ENCODE measurements at regions of chr1 and their contacts with region 1.

Region 1: DNA sequence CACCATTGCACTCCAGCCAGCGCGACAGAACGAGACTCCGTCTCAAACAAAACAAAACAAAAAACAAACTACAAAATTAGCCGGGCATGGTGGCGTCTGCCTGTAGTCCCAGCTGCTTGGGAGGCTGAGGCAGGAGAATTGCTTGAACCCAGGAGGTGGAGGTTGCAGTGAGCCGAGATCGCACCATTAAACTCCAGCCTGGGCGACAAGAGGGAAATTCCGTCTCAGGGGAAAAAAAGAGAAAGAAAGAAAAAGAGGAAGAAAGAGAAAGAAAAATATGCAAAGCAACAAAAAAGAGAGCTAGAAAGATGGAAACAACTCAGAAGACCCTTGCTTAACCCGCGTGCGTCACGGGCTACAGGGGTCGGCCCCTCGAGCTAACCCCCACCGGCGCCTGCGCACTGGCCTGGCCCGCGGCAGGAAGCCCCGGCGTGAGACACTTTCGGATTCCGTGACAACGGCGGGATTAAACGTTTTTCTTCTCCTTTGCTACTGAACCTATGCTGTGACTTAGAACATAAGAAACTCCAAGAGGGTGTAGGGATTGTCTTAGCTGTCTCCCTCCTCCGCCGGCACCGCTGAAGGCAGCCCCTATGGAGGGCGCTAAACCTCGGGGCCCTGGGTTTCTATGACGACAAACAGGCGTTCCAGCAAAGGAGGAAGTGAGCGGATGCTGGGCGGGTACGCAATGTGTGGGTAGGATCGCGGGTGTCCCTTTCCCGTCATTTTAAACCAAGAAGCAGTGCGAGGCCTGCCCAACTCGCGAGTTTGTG is at the start of gene AXDND1:
- DNase-seq: peak; percentile 86
- H3K4me3 Mint-ChIP-seq: peak within 1 kb of the TSS; percentile 84
- H3K27ac Mint-ChIP-seq: peak within 1 kb of the TSS; percentile 100
- H3K4me1 Mint-ChIP-seq: peaks cover 8% of the 10 kb centered on the region
- H3K27me3 Mint-ChIP-seq: peaks cover 4% of the 10 kb centered on the region
- total RNA-seq, gene AXDND1: 0.62 TPM in 1 of 2 replicates, not detected in the other

Region 2: DNA sequence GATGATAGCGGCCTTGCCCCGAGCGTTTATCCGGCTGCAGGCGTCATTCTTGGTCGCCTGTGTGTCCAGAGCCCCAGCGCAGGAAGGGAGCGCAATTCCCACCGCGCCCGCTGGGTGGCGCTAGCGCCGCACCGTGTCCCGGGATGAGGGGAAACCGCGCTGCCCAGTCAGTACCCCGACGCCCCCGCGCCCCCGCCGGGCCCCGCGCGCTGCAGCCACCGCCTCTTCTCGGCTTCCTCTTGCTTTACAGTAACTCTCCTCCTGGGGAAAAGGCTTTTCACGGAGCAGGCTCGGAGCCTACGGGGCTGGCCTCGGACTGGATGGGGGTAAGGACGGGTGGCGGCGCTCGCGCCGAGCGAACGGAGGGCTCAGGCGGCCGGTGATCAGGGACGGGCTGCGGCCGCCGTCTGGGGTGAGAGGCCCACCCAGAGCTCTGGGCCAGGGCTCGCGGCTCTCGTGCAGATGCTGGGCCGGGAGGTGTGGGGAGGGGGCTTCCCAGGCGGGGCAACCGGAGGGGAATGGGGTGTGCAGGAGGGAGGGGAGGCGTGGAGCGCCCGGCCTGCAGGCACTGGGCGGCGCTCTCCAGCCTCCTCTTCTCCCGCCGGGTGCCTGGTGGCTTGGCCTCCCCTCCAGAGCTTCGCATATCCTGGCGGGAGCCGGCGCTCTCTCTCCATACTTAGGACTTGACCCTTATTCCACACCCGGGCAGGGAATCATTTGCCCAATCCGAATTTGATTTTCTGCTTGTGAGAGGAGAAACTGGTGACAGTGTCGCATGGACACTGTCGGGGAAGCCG is 822.7 kb before region 1 on chr1:
- intact Hi-C with region 1: loop called (anchors 5 kb)
- DNase-seq: peak; percentile 83
- H3K4me3 Mint-ChIP-seq: peak overlapping the region; percentile 87
- H3K27ac Mint-ChIP-seq: peak overlapping the region; percentile 72
- H3K4me1 Mint-ChIP-seq: peaks cover 3% of the 10 kb centered on the region
- H3K27me3 Mint-ChIP-seq: no peaks in the 10 kb centered on the region

Region 3: DNA sequence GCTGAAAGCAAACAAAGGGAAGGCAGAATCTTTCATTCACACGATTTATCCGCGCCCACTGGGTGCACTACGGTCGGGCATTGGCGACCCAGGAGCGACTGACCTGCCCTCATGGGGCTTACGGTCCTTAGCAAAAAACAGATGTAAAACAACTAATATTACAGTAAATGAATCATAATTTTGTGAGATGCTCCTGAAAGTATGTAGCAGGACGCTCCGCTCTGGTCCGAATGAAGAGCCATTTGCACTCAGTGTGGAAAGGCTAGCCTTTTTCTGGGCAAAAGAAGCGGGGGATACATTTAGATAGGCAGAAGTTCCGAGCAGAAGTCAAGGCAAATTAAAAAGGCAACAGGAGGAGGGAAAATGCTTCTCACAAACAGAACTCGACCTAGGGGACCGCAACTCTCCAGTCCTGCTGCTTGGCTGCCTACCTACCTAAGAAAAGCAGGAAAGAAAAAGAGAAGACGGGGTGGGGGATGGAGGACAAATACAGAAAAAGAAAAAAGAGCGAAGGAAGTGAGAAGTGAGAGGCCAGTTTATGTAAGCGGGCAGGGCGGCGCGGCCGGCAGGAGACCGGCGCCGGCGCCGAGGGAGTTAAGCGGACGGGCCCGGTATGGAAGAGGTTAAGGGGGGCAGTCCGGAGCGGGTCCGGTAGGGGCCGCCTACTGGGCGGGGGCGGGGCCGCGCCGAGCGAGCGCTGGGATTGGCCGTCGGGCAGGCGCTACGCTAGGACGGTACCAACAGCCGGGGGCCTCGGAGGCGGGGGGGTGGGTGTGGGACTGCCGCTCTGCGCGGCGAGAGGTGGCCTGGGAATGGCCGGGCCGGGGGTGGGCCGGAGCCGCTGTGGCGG is 340.2 kb before region 1 on chr1 and contains the start of gene FAM20B:
- intact Hi-C with region 1: loop called (anchors 2 kb)
- DNase-seq: peak; percentile 84
- H3K4me3 Mint-ChIP-seq: peak within 1 kb of the TSS; percentile 93
- H3K27ac Mint-ChIP-seq: peak within 1 kb of the TSS; percentile 84
- H3K4me1 Mint-ChIP-seq: peaks cover 32% of the 10 kb centered on the region
- H3K27me3 Mint-ChIP-seq: peaks cover 15% of the 10 kb centered on the region
- total RNA-seq, gene FAM20B: 38.1 and 39.7 TPM in 2 replicates

Region 4: DNA sequence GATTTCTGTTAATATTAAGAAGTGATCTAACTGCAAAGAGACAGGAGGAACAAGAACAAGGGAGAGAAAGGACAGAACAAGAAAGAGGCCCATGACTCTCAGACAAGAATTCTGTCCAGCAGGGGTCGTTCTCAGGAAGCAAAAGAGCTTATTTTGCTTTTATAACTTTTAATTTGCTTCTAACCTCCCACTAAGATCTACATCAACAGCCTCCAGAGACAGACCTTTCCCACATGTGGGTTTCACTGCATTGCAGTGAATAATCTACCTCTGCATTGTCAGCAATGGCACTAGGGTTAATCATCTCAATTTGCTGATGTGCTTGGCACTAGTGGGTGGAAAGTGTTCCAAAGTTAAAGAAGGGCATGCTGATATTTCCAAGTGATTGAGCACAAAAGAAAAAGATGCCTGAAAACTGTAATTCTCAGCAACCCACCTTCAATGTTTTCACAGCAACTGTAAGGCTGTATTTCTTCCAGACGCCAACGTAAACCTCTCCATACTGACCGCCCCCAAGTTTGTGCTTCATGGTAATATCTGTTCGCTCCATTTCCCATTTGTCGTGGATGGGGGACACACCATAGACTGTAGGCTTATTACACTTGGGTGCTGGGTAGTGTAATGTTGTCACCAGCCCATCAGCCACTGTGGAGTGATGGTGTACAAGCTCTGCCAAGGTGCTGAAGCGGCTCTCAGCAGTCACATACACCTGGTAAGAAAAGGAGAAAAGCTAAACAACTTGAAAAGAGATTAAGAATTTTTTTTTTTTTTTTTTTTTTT is 244.2 kb before region 1 on chr1:
- intact Hi-C with region 1: loop called (anchors 1 kb)
- DNase-seq: no peak
- H3K4me3 Mint-ChIP-seq: no peak overlapping the region
- H3K27ac Mint-ChIP-seq: no peak overlapping the region
- H3K4me1 Mint-ChIP-seq: peaks cover 8% of the 10 kb centered on the region
- H3K27me3 Mint-ChIP-seq: no peaks in the 10 kb centered on the region

Region 5: GRCh38 chr1:179142889-179143299 is 222.6 kb before region 1 on chr1:
- intact Hi-C with region 1: loop called (anchors 5 kb)
- DNase-seq: no peak
- H3K4me3 Mint-ChIP-seq: peak overlapping the region; percentile 38
- H3K27ac Mint-ChIP-seq: peak overlapping the region; percentile 76
- H3K4me1 Mint-ChIP-seq: peaks cover 22% of the 10 kb centered on the region
- H3K27me3 Mint-ChIP-seq: no peaks in the 10 kb centered on the region

Region 6: DNA sequence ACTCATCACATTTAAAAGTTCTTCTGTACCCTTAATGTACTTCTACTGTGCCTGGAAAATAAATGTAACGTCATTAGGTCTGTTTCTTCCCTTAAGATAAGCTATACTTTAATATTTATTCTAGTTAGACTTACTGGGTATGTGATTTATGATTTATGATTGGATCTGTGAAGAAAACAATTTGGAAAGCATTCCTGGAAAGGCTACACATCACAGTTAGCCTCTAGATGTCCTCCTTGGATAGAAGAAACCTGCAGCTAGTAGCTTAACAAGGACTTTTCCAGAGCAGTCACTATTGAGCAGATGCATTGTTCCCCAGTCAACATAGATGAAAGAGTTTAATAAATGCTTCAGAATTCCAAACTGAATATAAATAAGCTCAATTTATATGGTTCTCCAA is 113.8 kb before region 1 on chr1:
- intact Hi-C with region 1: loop called (anchors 1 kb)
- DNase-seq: no peak
- H3K4me3 Mint-ChIP-seq: no peak overlapping the region
- H3K27ac Mint-ChIP-seq: no peak overlapping the region
- H3K4me1 Mint-ChIP-seq: no peaks in the 10 kb centered on the region
- H3K27me3 Mint-ChIP-seq: no peaks in the 10 kb centered on the region

Region 7: GRCh38 chr1:180154325-180155181 is 789.0 kb after region 1 on chr1 and contains the start of gene QSOX1:
- intact Hi-C with region 1: loop called (anchors 5 kb)
- DNase-seq: peak; percentile 86
- H3K4me3 Mint-ChIP-seq: peak within 1 kb of the TSS; percentile 89
- H3K27ac Mint-ChIP-seq: peak within 1 kb of the TSS; percentile 90
- H3K4me1 Mint-ChIP-seq: peaks cover 36% of the 10 kb centered on the region
- H3K27me3 Mint-ChIP-seq: peaks cover 3% of the 10 kb centered on the region
- total RNA-seq, gene QSOX1: 58.7 and 62.6 TPM in 2 replicates

Measured in activated T-helper 2 cell treated with anti-CD3 and anti-CD28 coated beads, Interferon-gamma antibody, Interleukin-2, Interleukin-4, amounts not matched to agents 10 μg/mL and 5 μg/mL and 100 μg/mL, durations not matched to agents 14 hours and 24 hours and 36 hours (primary cell).